PC-9 (cell line): ENCODE measurements at regions of chr15 and their contacts with region 1.

Region 1: GRCh38 chr15:78872972-78873792 is 492 bp downstream of the MORF4L1 start:
- DNase-seq: peak; percentile 90
- H3K4me3 ChIP-seq: peak overlapping the region; percentile 100
- H3K27ac ChIP-seq: peak overlapping the region; percentile 99
- H3K4me1 ChIP-seq: peaks cover 33% of the 10 kb centered on the region
- H3K27me3 ChIP-seq: no peaks in the 10 kb centered on the region
- CTCF ChIP-seq: peak; percentile 50; the same call in 1 of the 2 replicates

Region 2: GRCh38 chr15:78299101-78299930 is 573.9 kb before region 1 on chr15 and contains the start of gene SKIC8:
- CTCF ChIA-PET with region 1: no interaction called
- POLR2A ChIA-PET with region 1: interaction called, 11 read pairs
- intact Hi-C with region 1: no loop called
- DNase-seq: peak; percentile 87 to 93
- H3K4me3 ChIP-seq: peak within 1 kb of the TSS; percentile 72
- H3K27ac ChIP-seq: peak within 1 kb of the TSS; percentile 92
- H3K4me1 ChIP-seq: peaks cover 54% of the 10 kb centered on the region
- H3K27me3 ChIP-seq: no peaks in the 10 kb centered on the region
- CTCF ChIP-seq: no peak
- total RNA-seq, gene SKIC8: 44.5 and 47.7 TPM in 2 replicates

Region 3: GRCh38 chr15:78739996-78740903 is 132.9 kb before region 1 on chr15:
- CTCF ChIA-PET with region 1: no interaction called
- POLR2A ChIA-PET with region 1: interaction called, 23 read pairs
- intact Hi-C with region 1: no loop called
- DNase-seq: peak in 1 of 2 experiments; percentile 73
- H3K4me3 ChIP-seq: no peak overlapping the region
- H3K27ac ChIP-seq: no peak overlapping the region
- H3K4me1 ChIP-seq: no peaks in the 10 kb centered on the region
- H3K27me3 ChIP-seq: peaks cover 4% of the 10 kb centered on the region; the same call in 1 of the 2 replicates
- CTCF ChIP-seq: peak; percentile 63

Region 4: GRCh38 chr15:78811124-78811824 is 61.9 kb before region 1 on chr15 and contains the start of gene ADAMTS7:
- CTCF ChIA-PET with region 1: no interaction called
- POLR2A ChIA-PET with region 1: interaction called, 10 read pairs
- intact Hi-C with region 1: no loop called
- DNase-seq: peak in 1 of 2 experiments; percentile 64
- H3K4me3 ChIP-seq: peak within 1 kb of the TSS; percentile 48
- H3K27ac ChIP-seq: no peak within 1 kb of the TSS
- H3K4me1 ChIP-seq: peaks cover 5% of the 10 kb centered on the region; the same call in 1 of the 2 replicates
- H3K27me3 ChIP-seq: peaks cover 31% of the 10 kb centered on the region
- CTCF ChIP-seq: peak; percentile 70
- total RNA-seq, gene ADAMTS7: 1.3 and 1.9 TPM in 2 replicates

Region 5: GRCh38 chr15:78850352-78850751 is 22.8 kb before region 1 on chr15:
- CTCF ChIA-PET with region 1: no interaction called
- POLR2A ChIA-PET with region 1: interaction called, 17 read pairs
- intact Hi-C with region 1: no loop called
- DNase-seq: no peak
- H3K4me3 ChIP-seq: no peak overlapping the region
- H3K27ac ChIP-seq: no peak overlapping the region
- H3K4me1 ChIP-seq: no peaks in the 10 kb centered on the region
- H3K27me3 ChIP-seq: no peaks in the 10 kb centered on the region
- CTCF ChIP-seq: no peak

Region 6: GRCh38 chr15:78859971-78860732 is 13.0 kb before region 1 on chr15:
- CTCF ChIA-PET with region 1: no interaction called
- POLR2A ChIA-PET with region 1: no interaction called
- intact Hi-C with region 1: loop called (anchors 1 kb)
- DNase-seq: peak; percentile 75 to 76
- H3K4me3 ChIP-seq: peak overlapping the region; percentile 62
- H3K27ac ChIP-seq: peak overlapping the region; percentile 49
- H3K4me1 ChIP-seq: no peaks in the 10 kb centered on the region
- H3K27me3 ChIP-seq: no peaks in the 10 kb centered on the region
- CTCF ChIP-seq: peak; percentile 61

Region 7: DNA sequence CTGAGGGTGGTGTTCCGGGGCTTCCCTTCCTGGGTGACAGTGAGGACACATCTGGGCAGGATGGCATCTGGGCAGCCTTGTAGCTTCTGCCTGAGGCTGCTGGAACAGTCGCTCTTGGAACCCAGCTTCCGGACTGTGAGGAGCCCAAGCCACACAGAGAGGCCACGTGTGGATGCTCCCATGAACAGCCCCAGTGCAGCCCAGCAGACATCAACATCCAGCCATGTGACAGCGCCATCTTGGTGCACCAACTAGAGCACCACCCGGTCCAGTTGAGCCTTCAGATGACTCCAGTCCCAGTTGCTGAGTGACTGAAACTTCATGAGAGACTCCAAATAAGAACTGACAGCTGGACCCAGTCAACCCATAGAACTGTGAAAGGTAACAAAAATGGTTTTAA is 87.1 kb after region 1 on chr15:
- CTCF ChIA-PET with region 1: no interaction called
- POLR2A ChIA-PET with region 1: no interaction called
- intact Hi-C with region 1: no loop called
- DNase-seq: no peak
- H3K4me3 ChIP-seq: no peak overlapping the region
- H3K27ac ChIP-seq: no peak overlapping the region
- H3K4me1 ChIP-seq: no peaks in the 10 kb centered on the region
- H3K27me3 ChIP-seq: no peaks in the 10 kb centered on the region
- CTCF ChIP-seq: no peak

Region 8: GRCh38 chr15:78979456-78980320 is 106.5 kb after region 1 on chr15:
- CTCF ChIA-PET with region 1: no interaction called
- POLR2A ChIA-PET with region 1: no interaction called
- intact Hi-C with region 1: loop called (anchors 1 kb)
- DNase-seq: peak; percentile 62 to 63
- H3K4me3 ChIP-seq: no peak overlapping the region
- H3K27ac ChIP-seq: no peak overlapping the region
- H3K4me1 ChIP-seq: peaks cover 5% of the 10 kb centered on the region
- H3K27me3 ChIP-seq: no peaks in the 10 kb centered on the region
- CTCF ChIP-seq: peak; percentile 87

Region 9: GRCh38 chr15:78992416-78993256 is 119.5 kb after region 1 on chr15:
- CTCF ChIA-PET with region 1: no interaction called
- POLR2A ChIA-PET with region 1: no interaction called
- intact Hi-C with region 1: no loop called
- DNase-seq: no peak
- H3K4me3 ChIP-seq: no peak overlapping the region
- H3K27ac ChIP-seq: no peak overlapping the region
- H3K4me1 ChIP-seq: peaks cover 34% of the 10 kb centered on the region
- H3K27me3 ChIP-seq: no peaks in the 10 kb centered on the region
- CTCF ChIP-seq: no peak

Region 10: DNA sequence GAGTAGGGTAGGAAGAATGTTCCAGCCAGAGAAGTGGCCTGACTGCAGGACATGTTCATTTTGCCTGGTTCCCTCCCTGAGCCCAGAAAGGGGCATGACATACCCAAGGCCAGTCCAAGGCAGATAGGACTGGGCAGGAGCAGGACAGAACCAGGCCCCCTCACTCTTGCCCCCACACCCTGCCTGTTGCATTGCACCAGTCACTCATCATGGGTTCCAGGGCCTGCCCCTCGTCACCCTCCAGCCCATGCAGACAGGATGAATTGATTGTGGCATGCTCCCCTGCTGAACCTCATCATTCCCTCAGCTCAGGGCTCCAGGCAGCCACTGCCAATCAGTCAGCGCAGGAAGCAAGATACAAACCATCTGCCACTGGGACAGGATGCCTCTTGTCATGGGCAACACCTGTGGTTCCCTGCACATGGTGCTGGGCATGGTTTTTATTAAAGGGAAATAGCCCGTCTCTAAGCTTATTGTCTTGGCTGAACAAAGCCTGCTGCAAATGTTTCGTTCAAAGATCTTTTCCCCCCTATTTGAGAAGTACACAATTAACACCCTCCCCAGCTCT is 168.5 kb after region 1 on chr15:
- CTCF ChIA-PET with region 1: no interaction called
- POLR2A ChIA-PET with region 1: no interaction called
- intact Hi-C with region 1: no loop called
- DNase-seq: no peak
- H3K4me3 ChIP-seq: no peak overlapping the region
- H3K27ac ChIP-seq: no peak overlapping the region
- H3K4me1 ChIP-seq: no peaks in the 10 kb centered on the region
- H3K27me3 ChIP-seq: no peaks in the 10 kb centered on the region; the same call in 1 of the 2 replicates
- CTCF ChIP-seq: no peak

Region 11: DNA sequence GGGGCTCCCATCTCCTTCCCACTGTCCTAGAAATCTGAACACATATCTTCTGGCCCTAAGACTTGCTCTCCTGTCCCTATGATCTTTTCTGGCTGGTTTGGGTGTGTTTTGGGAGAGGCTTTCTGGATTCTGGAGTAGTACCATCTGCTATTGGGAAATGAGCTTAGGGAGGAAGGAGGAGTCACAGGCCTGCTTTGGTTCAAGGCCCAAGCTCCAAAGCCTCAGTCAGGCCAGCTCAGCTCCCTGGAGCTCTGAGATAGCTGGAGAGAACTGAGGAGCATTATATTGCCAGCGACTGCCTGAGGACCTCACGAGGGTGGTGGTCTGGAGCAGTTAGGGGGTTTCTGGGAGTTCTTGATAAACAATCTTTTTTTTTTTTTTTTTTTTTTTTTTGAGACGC is 198.7 kb after region 1 on chr15:
- CTCF ChIA-PET with region 1: no interaction called
- POLR2A ChIA-PET with region 1: no interaction called
- intact Hi-C with region 1: no loop called
- DNase-seq: no peak
- H3K4me3 ChIP-seq: no peak overlapping the region
- H3K27ac ChIP-seq: no peak overlapping the region
- H3K4me1 ChIP-seq: peaks cover 13% of the 10 kb centered on the region
- H3K27me3 ChIP-seq: no peaks in the 10 kb centered on the region
- CTCF ChIP-seq: no peak